Ovary (tissue), 10 donors: ENCODE measurements at regions of chr1 and their contacts with region 1.

Region 1: GRCh38 chr1:31405578-31406245 is 7.3 kb upstream of the SERINC2 start:
- DNase-seq: no peak
- H3K4me3 ChIP-seq: no peak overlapping the region
- H3K27ac ChIP-seq: no peak overlapping the region
- H3K4me1 ChIP-seq: no peaks in the 10 kb centered on the region
- H3K27me3 ChIP-seq: no peaks in the 10 kb centered on the region
- CTCF ChIP-seq: no peak
- EP300 ChIP-seq: no peak
- POLR2A ChIP-seq: no peak

Region 2: GRCh38 chr1:31387612-31388011 is 18.1 kb before region 1 on chr1:
- intact Hi-C with region 1: loop called in 1 of 4 experiments (anchors 2 kb)
- DNase-seq: no peak
- H3K4me3 ChIP-seq: no peak overlapping the region
- H3K27ac ChIP-seq: no peak overlapping the region
- H3K4me1 ChIP-seq: no peaks in the 10 kb centered on the region
- H3K27me3 ChIP-seq: no peaks in the 10 kb centered on the region
- CTCF ChIP-seq: no peak
- EP300 ChIP-seq: no peak
- POLR2A ChIP-seq: no peak

Region 3: GRCh38 chr1:31509124-31510072 is 103.7 kb after region 1 on chr1:
- intact Hi-C with region 1: no loop called
- DNase-seq: no peak
- H3K4me3 ChIP-seq: no peak overlapping the region
- H3K27ac ChIP-seq: no peak overlapping the region
- H3K4me1 ChIP-seq: no peaks in the 10 kb centered on the region
- H3K27me3 ChIP-seq: no peaks in the 10 kb centered on the region
- CTCF ChIP-seq: no peak
- EP300 ChIP-seq: no peak
- POLR2A ChIP-seq: no peak